GM18951 (cell line): ENCODE measurements at regions of chr12 and their contacts with region 1.

Region 1: DNA sequence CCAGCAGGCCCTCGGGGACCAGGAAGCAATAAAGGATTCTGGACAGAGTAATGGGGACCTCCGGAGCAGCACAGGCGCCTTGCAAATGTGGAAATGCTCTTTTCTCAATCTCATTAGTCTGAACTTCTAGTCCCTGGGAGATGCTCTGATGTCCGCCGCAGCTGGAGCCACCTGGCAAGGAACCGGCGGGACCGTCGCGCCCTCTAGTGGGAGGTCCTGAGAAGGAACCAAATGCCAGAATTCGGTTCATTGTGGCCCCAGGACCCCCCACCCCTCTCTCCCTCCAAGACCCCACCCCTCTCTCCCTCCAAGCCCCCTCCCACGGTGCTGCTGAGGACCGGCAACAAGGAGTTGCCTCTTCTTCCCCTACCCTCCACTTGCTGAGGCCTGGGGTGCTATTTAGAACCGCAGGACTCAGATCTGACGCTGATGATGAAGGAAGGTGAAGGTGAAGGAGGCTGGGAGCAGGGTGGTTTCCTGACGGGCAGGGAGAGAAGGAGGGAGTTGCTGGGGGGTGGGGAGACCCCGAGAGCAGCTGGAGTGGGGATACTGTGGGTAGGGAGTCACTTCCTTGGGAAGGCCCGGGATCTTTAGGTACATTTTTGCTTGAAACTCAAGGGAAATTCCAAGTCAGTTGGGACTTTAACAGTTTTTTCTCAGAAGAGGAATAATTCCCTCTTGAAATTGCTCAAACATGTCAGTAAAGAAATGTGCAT is 42.5 kb downstream of the SMIM41 start:
- POLR2A ChIP-seq: no peak

Region 2: DNA sequence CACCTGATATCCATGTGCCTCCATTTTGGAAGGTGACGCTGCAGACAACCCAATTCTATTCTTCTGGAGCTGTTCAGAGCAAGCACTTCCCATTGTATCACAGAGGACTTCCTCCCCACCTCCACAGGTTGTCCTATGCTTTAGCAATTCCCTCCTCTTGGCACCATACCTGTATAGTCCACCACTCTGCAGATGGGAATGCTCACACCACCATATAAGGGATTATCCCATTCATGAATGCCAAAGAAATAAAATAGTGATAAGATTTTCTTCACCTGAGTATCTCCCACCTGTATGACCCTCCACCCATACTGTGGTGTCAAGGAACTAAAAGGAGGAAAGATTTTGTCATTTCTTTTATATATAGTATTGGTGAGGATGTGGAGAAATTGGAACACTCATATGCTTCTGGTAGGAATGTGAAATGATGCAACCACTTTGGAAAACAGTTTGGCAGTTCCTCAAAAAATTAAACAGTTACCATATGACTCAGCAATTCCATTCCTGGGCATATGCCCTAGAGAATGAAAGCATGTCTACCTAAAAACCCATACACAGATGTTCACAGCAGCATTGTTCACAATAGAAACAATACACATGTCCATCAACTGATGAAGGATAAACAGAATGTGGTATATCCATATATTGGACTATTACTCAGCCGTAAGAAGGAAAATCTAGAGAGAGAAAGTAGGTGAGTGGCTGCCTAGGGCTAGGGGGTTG is 348.7 kb before region 1 on chr12:
- in situ Hi-C with region 1: no loop called
- POLR2A ChIP-seq: no peak

Region 3: GRCh38 chr12:52023182-52023975 is 98.6 kb before region 1 on chr12:
- in situ Hi-C with region 1: loop called (anchors 10 kb)
- POLR2A ChIP-seq: no peak

Region 4: GRCh38 chr12:52495389-52495788 is 373.4 kb after region 1 on chr12:
- in situ Hi-C with region 1: no loop called
- POLR2A ChIP-seq: no peak